Aorta (tissue), 5 donors: ENCODE measurements at regions of chr17 and their contacts with region 1.

Region 1: GRCh38 chr17:47970704-47971463 is at the start of gene CDK5RAP3:
- DNase-seq: peak; percentile 100
- ATAC-seq: peak; percentile 100
- H3K4me3 ChIP-seq: peak within 1 kb of the TSS; percentile 52 to 55
- H3K27ac ChIP-seq: peak within 1 kb of the TSS in 1 of 2 donors; percentile 11
- H3K4me1 ChIP-seq: peaks cover 0 to 3% of the 10 kb centered on the region in 2 donors
- H3K27me3 ChIP-seq: no peaks in the 10 kb centered on the region
- total RNA-seq, gene CDK5RAP3: 99.5 to 196 TPM

Region 2: DNA sequence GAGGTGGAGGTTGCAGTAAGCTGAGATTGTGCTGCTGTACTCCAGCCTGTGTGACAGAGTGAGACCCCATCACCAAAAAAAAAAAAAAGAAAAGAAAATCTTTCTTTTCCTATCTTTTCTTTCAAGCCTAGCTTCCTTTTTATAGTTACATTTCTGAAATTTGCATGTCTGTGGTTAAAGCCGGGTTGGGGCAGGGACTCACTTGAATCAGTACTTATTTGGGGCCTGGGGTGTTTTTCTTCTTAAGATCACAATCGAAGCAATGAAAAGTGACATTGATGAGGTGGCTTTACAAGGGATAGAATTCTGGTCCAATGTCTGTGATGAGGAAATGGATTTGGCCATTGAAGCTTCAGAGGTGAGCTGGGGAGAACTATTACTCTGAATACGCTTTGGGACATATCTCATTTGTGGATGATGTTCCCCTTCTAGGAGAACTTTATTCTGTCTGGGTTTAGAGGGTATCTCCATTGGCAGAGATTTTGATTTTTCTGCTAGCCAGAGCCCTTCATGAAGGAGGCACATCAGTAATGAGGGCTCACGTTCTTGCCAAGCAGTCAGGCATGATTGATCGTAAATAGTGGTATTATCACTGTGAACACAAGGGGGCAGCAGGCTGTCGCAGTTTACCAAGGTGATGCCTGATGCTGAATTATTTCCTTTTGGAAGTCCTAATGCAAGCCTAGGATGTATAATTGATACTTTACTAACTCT is 306.8 kb before region 1 on chr17:
- intact Hi-C with region 1: no loop called
- DNase-seq: no peak
- ATAC-seq: peak; percentile 76
- H3K4me3 ChIP-seq: no peak overlapping the region
- H3K27ac ChIP-seq: no peak overlapping the region
- H3K4me1 ChIP-seq: no peaks in the 10 kb centered on the region
- H3K27me3 ChIP-seq: no peaks in the 10 kb centered on the region

Region 3: GRCh38 chr17:47829870-47830269 is 141.0 kb before region 1 on chr17:
- intact Hi-C with region 1: no loop called
- DNase-seq: no peak
- ATAC-seq: no peak
- H3K4me3 ChIP-seq: no peak overlapping the region
- H3K27ac ChIP-seq: no peak overlapping the region
- H3K4me1 ChIP-seq: peaks cover 0 to 4% of the 10 kb centered on the region in 2 donors
- H3K27me3 ChIP-seq: no peaks in the 10 kb centered on the region

Region 4: DNA sequence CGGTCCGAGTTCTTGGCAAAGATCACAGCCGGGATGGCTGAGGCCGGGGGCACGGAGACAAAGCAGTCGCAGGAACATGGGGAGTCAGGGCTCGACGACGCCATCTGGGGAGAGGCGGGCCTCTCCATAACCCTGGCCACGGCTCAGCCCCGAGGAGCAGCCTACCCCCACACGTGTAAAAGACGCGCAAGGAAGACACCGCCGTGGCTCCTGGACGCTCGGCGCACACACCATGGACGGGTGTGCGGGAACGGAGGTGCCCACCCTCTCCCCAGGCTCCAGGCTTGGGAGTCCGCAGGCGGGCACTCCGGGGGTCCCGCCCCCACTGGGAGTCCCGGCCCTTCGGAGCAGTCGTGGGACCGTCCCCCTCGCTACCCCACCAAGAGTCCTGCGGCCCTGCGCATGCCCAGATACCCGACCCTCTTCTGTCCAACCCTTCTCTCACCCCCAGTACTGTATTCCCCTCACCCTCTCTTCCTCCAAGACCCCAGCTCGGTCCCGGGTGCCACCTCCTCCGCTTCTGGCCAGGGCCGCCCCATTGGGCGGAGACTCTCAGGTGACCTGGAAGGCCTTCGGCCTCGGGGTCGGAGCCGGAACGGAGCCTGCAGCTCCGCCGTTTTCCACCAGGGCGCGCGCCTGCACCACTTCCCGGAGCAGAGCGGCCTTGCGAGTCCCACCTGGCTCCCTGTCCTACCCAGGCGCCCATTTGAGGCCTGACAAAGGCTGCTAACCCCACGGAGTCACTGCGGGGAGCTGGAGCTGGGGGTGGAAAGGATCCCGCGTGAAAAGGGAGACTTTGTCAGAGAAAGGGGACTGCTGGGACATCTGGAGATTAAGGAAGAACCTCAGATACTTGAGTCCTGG is 129.9 kb before region 1 on chr17 and contains the start of gene SCRN2:
- intact Hi-C with region 1: loop called (anchors 5 kb)
- DNase-seq: peak; percentile 92 to 96
- ATAC-seq: peak; percentile 95
- H3K4me3 ChIP-seq: peak within 1 kb of the TSS; percentile 36 to 54
- H3K27ac ChIP-seq: no peak within 1 kb of the TSS
- H3K4me1 ChIP-seq: no peaks in the 10 kb centered on the region
- H3K27me3 ChIP-seq: no peaks in the 10 kb centered on the region
- total RNA-seq, gene SCRN2: 19.3 to 37.6 TPM

Region 5: GRCh38 chr17:47895856-47896671 is 74.8 kb before region 1 on chr17 and contains the start of gene SP2:
- intact Hi-C with region 1: loop called (anchors 1 to 2 kb)
- DNase-seq: peak; percentile 99
- ATAC-seq: peak; percentile 97
- H3K4me3 ChIP-seq: peak within 1 kb of the TSS; percentile 92 to 97
- H3K27ac ChIP-seq: peak within 1 kb of the TSS; percentile 95 to 96
- H3K4me1 ChIP-seq: peaks cover 0 to 4% of the 10 kb centered on the region in 2 donors
- H3K27me3 ChIP-seq: no peaks in the 10 kb centered on the region
- total RNA-seq, gene SP2: 14.3 to 18.0 TPM

Region 6: DNA sequence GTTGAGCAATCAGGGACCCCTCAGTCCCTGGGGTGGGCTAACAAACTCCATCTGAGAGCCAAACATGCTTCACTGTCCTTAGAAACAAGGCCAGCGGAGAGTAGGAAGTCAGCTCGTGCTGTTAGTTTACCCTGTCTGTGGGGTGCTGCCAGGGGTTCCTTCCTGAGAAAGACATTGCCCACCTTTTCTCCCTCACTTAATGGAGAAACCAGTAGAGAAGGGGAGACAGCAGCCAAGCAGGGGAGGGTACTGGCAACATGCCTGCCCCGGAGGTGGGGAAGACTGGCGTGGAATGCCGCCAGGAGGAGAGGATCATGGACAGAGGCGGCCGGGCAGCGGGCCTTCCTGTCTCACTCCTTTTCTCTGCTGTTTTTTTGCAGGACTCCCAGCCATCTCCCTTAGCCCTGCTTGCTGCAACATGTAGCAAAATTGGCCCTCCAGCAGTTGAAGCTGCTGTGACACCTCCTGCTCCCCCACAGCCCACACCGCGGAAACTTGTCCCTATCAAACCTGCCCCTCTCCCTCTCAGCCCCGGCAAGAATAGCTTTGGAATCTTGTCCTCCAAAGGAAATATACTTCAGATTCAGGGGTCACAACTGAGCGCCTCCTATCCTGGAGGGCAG is 55.0 kb before region 1 on chr17:
- intact Hi-C with region 1: no loop called
- DNase-seq: no peak
- ATAC-seq: peak; percentile 50
- H3K4me3 ChIP-seq: no peak overlapping the region
- H3K27ac ChIP-seq: no peak overlapping the region
- H3K4me1 ChIP-seq: peaks cover 0 to 3% of the 10 kb centered on the region in 2 donors
- H3K27me3 ChIP-seq: no peaks in the 10 kb centered on the region